ENCODE measurements at regions of chr5 and their contacts with region 1.

Region 1: GRCh38 chr5:96614110-96614691 is 48.0 kb upstream of the CAST start:
- DNase-seq: peak; percentile 94
- H3K4me3 ChIP-seq: no peak overlapping the region
- H3K27ac ChIP-seq: peak overlapping the region; percentile 72
- H3K4me1 ChIP-seq: peaks cover 22% of the 10 kb centered on the region
- H3K27me3 ChIP-seq: no peaks in the 10 kb centered on the region
- CTCF ChIP-seq: peak; percentile 41 to 52

Region 2: GRCh38 chr5:96629774-96630173 is 15.6 kb after region 1 on chr5:
- CTCF ChIA-PET with region 1: no interaction called
- dilution Hi-C with region 1: no loop called
- in situ Hi-C with region 1: no loop called
- intact Hi-C with region 1: loop called (anchors 1 kb)
- DNase-seq: peak; percentile 99
- H3K4me3 ChIP-seq: no peak overlapping the region
- H3K27ac ChIP-seq: peak overlapping the region; percentile 84
- H3K4me1 ChIP-seq: peaks cover 59% of the 10 kb centered on the region
- H3K27me3 ChIP-seq: no peaks in the 10 kb centered on the region
- CTCF ChIP-seq: no peak

Region 3: GRCh38 chr5:96668725-96669124 is 54.5 kb after region 1 on chr5:
- CTCF ChIA-PET with region 1: no interaction called
- dilution Hi-C with region 1: loop called (anchors 5 kb)
- in situ Hi-C with region 1: loop called in 1 of 2 experiments (anchors 10 kb)
- intact Hi-C with region 1: no loop called
- DNase-seq: no peak
- H3K4me3 ChIP-seq: no peak overlapping the region
- H3K27ac ChIP-seq: no peak overlapping the region
- H3K4me1 ChIP-seq: peaks cover 9% of the 10 kb centered on the region
- H3K27me3 ChIP-seq: no peaks in the 10 kb centered on the region
- CTCF ChIP-seq: no peak

Region 4: GRCh38 chr5:96702503-96703383 is 88.5 kb after region 1 on chr5:
- CTCF ChIA-PET with region 1: interaction called, 4 read pairs
- dilution Hi-C with region 1: no loop called
- in situ Hi-C with region 1: no loop called
- intact Hi-C with region 1: loop called (anchors 1 kb)
- DNase-seq: peak; percentile 97
- H3K4me3 ChIP-seq: peak overlapping the region; percentile 63 to 79 (median 68)
- H3K27ac ChIP-seq: peak overlapping the region; percentile 99
- H3K4me1 ChIP-seq: peaks cover 54% of the 10 kb centered on the region
- H3K27me3 ChIP-seq: no peaks in the 10 kb centered on the region
- CTCF ChIP-seq: no peak

Region 5: GRCh38 chr5:96743065-96743768 is 129.0 kb after region 1 on chr5:
- CTCF ChIA-PET with region 1: no interaction called
- dilution Hi-C with region 1: loop called (anchors 5 kb)
- in situ Hi-C with region 1: no loop called
- intact Hi-C with region 1: no loop called
- DNase-seq: peak; percentile 46
- H3K4me3 ChIP-seq: no peak overlapping the region
- H3K27ac ChIP-seq: peak overlapping the region; percentile 17
- H3K4me1 ChIP-seq: peaks cover 4% of the 10 kb centered on the region
- H3K27me3 ChIP-seq: no peaks in the 10 kb centered on the region
- CTCF ChIP-seq: no peak

Region 6: DNA sequence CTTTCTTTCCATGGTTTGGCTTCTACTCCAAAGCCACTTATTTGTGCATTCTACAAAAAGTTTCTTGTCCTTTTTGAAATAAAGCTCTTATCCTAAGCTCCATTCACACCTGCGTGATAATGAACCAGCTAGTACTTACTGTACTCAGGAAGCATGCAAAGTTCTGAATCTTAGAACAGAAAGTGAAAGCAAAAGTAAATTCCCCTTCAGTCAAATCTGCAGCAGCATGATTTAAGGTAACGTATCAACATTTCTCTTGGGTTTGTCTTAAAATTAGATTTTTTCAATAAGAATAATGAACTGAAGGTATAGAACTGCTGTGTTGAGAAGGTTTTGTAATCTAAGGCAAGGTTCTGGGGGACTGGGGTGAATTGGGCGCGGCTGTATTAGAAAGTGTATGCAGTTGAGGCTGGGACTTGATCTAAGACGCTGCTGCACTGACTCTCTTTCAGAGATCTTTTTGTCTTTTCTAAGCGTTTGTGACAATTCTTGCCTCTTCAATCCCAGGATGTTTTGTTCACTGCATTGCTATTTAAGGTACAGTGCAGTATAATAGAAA is 262.2 kb after region 1 on chr5 and contains the start of gene ERAP2:
- CTCF ChIA-PET with region 1: no interaction called
- dilution Hi-C with region 1: no loop called
- in situ Hi-C with region 1: no loop called
- intact Hi-C with region 1: loop called (anchors 5 kb)
- DNase-seq: peak; percentile 51
- H3K4me3 ChIP-seq: peak within 1 kb of the TSS; percentile 46 to 75 (median 74)
- H3K27ac ChIP-seq: peak within 1 kb of the TSS; percentile 78
- H3K4me1 ChIP-seq: peaks cover 17% of the 10 kb centered on the region
- H3K27me3 ChIP-seq: no peaks in the 10 kb centered on the region
- CTCF ChIP-seq: no peak
- total RNA-seq, gene ERAP2: 2.8 to 14.3 TPM

Region 7: GRCh38 chr5:97162045-97162444 is 547.8 kb after region 1 on chr5:
- CTCF ChIA-PET with region 1: no interaction called
- dilution Hi-C with region 1: no loop called
- in situ Hi-C with region 1: loop called (anchors 25 kb)
- intact Hi-C with region 1: loop called (anchors 2 kb)
- DNase-seq: peak; percentile 65
- H3K4me3 ChIP-seq: no peak overlapping the region
- H3K27ac ChIP-seq: no peak overlapping the region
- H3K4me1 ChIP-seq: no peaks in the 10 kb centered on the region
- H3K27me3 ChIP-seq: no peaks in the 10 kb centered on the region
- CTCF ChIP-seq: peak; percentile 84 to 89